Activated naive CD4-positive, alpha-beta T cell treated with anti-CD3 and anti-CD28 coated beads for 36 hours (primary cell): ENCODE measurements at regions of chr3 and their contacts with region 1.

Region 1: GRCh38 chr3:156816800-156817645 is 9.1 kb upstream of the LEKR1 start:
- DNase-seq: peak; percentile 90
- H3K4me3 Mint-ChIP-seq: peak overlapping the region; percentile 90
- H3K27ac Mint-ChIP-seq: peak overlapping the region; percentile 88
- H3K4me1 Mint-ChIP-seq: peaks cover 22% of the 10 kb centered on the region
- H3K27me3 Mint-ChIP-seq: no peaks in the 10 kb centered on the region

Region 2: DNA sequence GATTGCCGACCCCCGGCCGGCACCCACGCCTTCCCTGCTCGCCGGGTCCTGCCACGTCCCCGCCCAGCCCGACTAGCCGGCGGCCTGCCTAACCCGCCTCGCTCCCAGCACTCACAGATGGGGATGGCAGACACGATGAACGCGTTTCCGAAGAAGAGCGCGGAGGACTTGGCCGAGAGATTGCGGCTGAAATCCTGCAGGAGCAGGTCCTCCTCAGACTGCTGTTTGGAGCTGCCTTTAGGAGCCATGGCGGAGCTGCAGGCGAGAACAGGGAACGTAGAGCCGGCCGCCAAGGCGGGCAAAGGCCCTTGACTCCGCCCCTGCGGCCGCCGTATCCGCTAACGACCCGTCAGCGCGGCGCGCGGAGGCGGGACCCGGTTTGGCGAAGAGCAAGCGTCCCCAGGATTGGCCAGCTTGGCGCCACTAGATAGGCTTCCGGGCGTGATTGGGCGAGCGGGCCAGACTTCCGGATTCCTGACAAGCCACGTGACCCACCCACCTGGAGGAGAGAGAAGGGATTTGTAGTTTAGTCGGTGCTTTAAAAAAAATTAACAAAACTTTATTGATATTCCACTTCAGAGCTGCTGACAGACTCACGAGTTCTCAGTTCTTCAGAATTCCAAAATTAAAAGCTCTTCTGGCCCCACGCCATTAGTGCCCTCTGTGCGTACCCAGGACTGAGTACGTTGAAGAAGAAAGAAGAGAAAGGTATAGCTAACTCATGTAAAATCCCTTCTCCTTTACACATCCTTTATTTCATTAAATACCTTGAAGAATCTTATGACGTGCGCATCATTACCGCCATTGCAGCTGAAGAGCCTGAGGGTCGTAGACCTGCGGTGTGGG is 262.0 kb before region 1 on chr3 and contains the start of gene SSR3:
- CTCF ChIA-PET with region 1: interaction called, 3 read pairs
- intact Hi-C with region 1: loop called (anchors 1 kb)
- DNase-seq: peak; percentile 99
- H3K4me3 Mint-ChIP-seq: peak within 1 kb of the TSS; percentile 90
- H3K27ac Mint-ChIP-seq: peak within 1 kb of the TSS; percentile 86
- H3K4me1 Mint-ChIP-seq: peaks cover 40% of the 10 kb centered on the region
- H3K27me3 Mint-ChIP-seq: no peaks in the 10 kb centered on the region
- total RNA-seq, gene SSR3: 128 to 138 TPM

Region 3: DNA sequence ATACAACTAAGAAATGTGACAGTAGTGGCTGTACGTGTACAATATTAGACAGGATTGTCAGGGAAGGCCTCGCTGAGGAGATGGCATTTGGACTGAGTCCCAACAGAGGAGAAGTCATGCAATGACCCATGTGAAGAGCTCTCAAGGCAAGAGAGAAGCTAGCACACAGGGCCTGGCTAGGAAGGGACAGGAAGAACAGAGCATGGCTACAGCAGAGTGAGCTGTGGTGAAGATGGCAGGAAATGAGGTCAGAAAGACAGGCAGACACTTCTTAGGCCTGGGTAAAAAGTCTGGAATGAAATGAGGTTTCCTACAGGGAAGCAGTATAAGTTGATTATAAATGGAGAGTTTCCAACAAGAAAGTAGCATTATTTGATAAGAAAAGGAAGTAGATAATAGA is 24.1 kb before region 1 on chr3:
- CTCF ChIA-PET with region 1: no interaction called
- intact Hi-C with region 1: loop called (anchors 2 kb)
- DNase-seq: peak; percentile 21
- H3K4me3 Mint-ChIP-seq: no peak overlapping the region
- H3K27ac Mint-ChIP-seq: no peak overlapping the region
- H3K4me1 Mint-ChIP-seq: peaks cover 21% of the 10 kb centered on the region
- H3K27me3 Mint-ChIP-seq: no peaks in the 10 kb centered on the region

Region 4: GRCh38 chr3:157376603-157377300 is 559.7 kb after region 1 on chr3:
- CTCF ChIA-PET with region 1: no interaction called
- intact Hi-C with region 1: no loop called
- DNase-seq: no peak
- H3K4me3 Mint-ChIP-seq: no peak overlapping the region
- H3K27ac Mint-ChIP-seq: no peak overlapping the region
- H3K4me1 Mint-ChIP-seq: no peaks in the 10 kb centered on the region
- H3K27me3 Mint-ChIP-seq: no peaks in the 10 kb centered on the region